ENCODE measurements at regions of chr2 and their contacts with region 1.

Region 1: GRCh38 chr2:196926562-196927375 is at the start of gene PGAP1:
- DNase-seq: peak; percentile 91 to 95
- ATAC-seq: peak; percentile 97 to 99 (median 99)
- H3K4me3 ChIP-seq: peak within 1 kb of the TSS; percentile 90
- H3K27ac ChIP-seq: peak within 1 kb of the TSS; percentile 78
- H3K4me1 ChIP-seq: peaks cover 9% of the 10 kb centered on the region
- H3K27me3 ChIP-seq: no peaks in the 10 kb centered on the region
- CTCF ChIP-seq: no peak
- total RNA-seq, gene PGAP1: 2.2 to 5.2 (median 3.0) TPM

Region 2: GRCh38 chr2:196586511-196586991 is 340.2 kb before region 1 on chr2:
- intact Hi-C with region 1: no loop called
- DNase-seq: no peak
- ATAC-seq: no peak
- H3K4me3 ChIP-seq: no peak overlapping the region
- H3K27ac ChIP-seq: no peak overlapping the region
- H3K4me1 ChIP-seq: no peaks in the 10 kb centered on the region
- H3K27me3 ChIP-seq: peaks cover 0 to 32% (median 8%) of the 10 kb centered on the region in 3 donors
- CTCF ChIP-seq: no peak

Region 3: DNA sequence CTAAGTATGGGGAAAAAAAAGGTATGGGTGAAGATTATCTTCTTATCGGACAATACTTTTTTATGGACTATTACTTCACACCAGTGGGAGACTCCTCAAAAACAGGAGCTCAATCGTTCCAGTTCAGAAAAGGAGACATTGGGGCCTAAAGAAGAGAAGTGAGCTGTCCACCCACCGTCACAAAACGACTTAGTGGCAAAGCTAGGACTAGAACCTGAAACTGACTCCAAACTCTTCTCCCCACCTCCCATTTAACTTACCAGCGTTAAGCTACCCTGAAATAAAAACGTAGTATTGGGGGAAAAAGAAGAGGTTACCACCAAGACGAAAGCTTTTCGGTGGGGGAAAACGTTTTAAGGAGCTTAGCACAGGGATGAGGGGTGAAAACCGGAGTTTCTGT is 127.8 kb before region 1 on chr2:
- intact Hi-C with region 1: loop called in 1 of 2 experiments (anchors 2 kb)
- DNase-seq: no peak
- ATAC-seq: peak in 1 of 4 donors; percentile 40
- H3K4me3 ChIP-seq: peak overlapping the region; percentile 80
- H3K27ac ChIP-seq: peak overlapping the region; percentile 77
- H3K4me1 ChIP-seq: peaks cover 22% of the 10 kb centered on the region
- H3K27me3 ChIP-seq: peaks cover 0 to 4% (median 0%) of the 10 kb centered on the region in 3 donors
- CTCF ChIP-seq: no peak

Region 4: GRCh38 chr2:196987649-196988364 is 61.0 kb after region 1 on chr2:
- intact Hi-C with region 1: loop called in 1 of 2 experiments (anchors 5 kb)
- DNase-seq: no peak
- ATAC-seq: peak; percentile 84 to 97 (median 90)
- H3K4me3 ChIP-seq: peak overlapping the region; percentile 53
- H3K27ac ChIP-seq: peak overlapping the region; percentile 46
- H3K4me1 ChIP-seq: peaks cover 19% of the 10 kb centered on the region
- H3K27me3 ChIP-seq: no peaks in the 10 kb centered on the region
- CTCF ChIP-seq: no peak